ENCODE measurements at regions of chr6 and their contacts with region 1.

Region 1: DNA sequence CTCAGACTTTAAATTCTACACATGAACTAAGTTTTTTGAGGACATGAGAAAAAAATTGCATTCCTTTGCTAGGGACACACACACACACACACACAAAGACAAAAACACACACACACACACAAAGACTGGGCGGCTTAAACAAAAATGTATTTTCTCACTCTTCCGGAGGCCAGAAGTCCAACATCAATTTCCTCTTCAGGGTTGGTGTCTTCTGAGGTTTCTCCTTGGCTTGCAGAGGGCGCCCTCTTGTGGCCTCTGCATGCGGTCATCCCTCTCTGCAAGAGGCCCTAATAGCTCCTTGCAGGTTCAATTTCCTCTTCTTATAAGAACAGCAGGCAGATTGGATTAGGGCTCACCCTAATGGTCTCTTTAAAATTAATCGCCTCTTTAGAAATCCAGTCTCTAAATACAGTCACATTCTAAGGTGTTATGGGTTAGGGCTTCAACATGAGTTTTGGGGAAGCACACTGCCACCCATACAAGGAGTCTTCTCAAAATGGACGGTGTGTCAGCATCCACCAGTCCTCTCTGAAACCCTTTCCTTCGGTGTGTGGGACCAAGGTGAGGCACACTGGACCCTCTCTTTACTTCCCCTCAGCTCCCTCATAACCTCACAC is 61.4 kb downstream of the GPR6 start:
- DNase-seq: peak; percentile 30 to 90
- H3K4me3 ChIP-seq: peak overlapping the region; percentile 26 to 52
- H3K27ac ChIP-seq: peak overlapping the region; percentile 10 to 45
- H3K4me1 ChIP-seq: no peaks in the 10 kb centered on the region
- H3K27me3 ChIP-seq: no peaks in the 10 kb centered on the region
- CTCF ChIP-seq: peak; percentile 68 to 91 (median 87)

Region 2: GRCh38 chr6:109526905-109527628 is 512.4 kb before region 1 on chr6:
- intact Hi-C with region 1: loop called (anchors 2 kb)
- DNase-seq: no peak
- H3K4me3 ChIP-seq: no peak overlapping the region
- H3K27ac ChIP-seq: no peak overlapping the region
- H3K4me1 ChIP-seq: no peaks in the 10 kb centered on the region
- H3K27me3 ChIP-seq: no peaks in the 10 kb centered on the region
- CTCF ChIP-seq: peak; percentile 30 to 57 (median 40)

Region 3: DNA sequence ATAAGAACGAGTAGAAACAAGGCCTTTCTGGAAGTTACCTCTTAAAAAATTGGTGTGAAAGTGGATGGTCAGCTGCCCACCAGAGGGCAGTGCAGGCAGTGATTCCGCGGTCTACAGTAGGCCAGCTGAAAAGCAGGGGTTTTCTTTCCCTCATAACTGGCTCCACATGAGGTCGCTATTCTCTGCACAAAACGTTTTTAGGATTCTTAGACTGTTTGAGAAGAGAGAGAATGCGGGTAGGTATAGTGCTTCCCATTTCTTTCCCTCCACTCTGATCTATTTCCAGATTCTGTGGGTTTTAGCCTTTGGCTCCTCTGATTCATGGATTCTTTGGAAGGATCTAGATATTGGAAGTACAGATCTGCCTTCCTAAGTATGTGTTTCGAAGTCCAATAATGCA is 334.2 kb before region 1 on chr6:
- intact Hi-C with region 1: loop called (anchors 1 kb)
- DNase-seq: peak in 1 of 2 donors; percentile 86
- H3K4me3 ChIP-seq: no peak overlapping the region
- H3K27ac ChIP-seq: no peak overlapping the region
- H3K4me1 ChIP-seq: no peaks in the 10 kb centered on the region
- H3K27me3 ChIP-seq: no peaks in the 10 kb centered on the region
- CTCF ChIP-seq: peak; percentile 90 to 98 (median 95)

Region 4: GRCh38 chr6:109958626-109959025 is 80.8 kb before region 1 on chr6:
- intact Hi-C with region 1: no loop called
- DNase-seq: no peak
- H3K4me3 ChIP-seq: no peak overlapping the region
- H3K27ac ChIP-seq: no peak overlapping the region
- H3K4me1 ChIP-seq: no peaks in the 10 kb centered on the region
- H3K27me3 ChIP-seq: no peaks in the 10 kb centered on the region
- CTCF ChIP-seq: no peak